Activated naive CD4-positive, alpha-beta T cell treated with anti-CD3 and anti-CD28 coated beads for 36 hours (primary cell): ENCODE measurements at regions of chr2 and their contacts with region 1.

Region 1: DNA sequence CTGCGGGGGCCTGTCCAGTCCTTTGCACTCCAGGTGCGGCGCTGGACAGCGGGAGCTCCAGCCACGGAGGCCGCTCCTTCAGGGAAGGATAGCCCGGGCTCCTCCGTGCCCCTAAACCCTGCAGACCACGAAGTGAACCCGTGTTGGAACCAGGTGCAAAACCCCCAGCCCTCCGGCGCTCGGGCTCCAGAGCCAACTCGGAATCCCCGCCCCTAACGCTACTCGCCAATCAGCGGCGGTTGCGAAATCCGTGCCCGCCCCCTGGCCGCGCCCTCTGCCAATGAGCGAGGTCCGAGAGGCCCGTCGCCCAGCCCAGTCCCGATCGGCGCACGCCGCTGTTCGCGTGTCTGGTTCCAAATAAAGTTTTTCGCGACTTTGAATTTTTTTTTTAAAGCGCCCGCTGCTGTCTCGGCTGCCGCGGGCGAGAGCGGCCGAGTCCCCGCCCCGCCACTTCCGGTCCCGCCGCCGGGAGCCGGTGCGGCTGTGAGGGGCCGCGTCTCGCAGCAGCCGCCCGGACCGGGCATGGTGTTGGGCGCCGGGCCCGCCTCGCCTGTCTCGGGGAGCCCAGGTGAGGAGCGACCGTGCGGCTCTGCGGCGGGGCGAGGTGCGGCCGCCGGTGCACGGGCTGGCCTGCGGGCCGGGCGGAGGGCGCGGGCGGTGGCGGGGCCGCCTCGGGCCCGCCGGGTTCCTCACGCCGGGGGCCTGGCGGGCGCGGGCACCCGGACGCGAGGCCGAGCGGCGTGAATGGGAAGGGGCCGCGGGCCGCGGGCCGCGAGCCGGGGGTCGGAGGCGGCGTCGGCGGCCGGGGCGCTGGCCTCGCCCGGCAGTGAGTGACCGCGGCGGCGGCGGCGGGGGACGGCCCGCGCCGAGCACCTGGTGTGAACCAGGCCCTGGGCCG is at the start of gene UBE2F:
- DNase-seq: peak; percentile 96
- H3K4me3 Mint-ChIP-seq: peak within 1 kb of the TSS; percentile 81
- H3K27ac Mint-ChIP-seq: peak within 1 kb of the TSS; percentile 65
- H3K4me1 Mint-ChIP-seq: peaks cover 40% of the 10 kb centered on the region
- H3K27me3 Mint-ChIP-seq: no peaks in the 10 kb centered on the region
- total RNA-seq, gene UBE2F: 43.4 to 45.5 TPM

Region 2: DNA sequence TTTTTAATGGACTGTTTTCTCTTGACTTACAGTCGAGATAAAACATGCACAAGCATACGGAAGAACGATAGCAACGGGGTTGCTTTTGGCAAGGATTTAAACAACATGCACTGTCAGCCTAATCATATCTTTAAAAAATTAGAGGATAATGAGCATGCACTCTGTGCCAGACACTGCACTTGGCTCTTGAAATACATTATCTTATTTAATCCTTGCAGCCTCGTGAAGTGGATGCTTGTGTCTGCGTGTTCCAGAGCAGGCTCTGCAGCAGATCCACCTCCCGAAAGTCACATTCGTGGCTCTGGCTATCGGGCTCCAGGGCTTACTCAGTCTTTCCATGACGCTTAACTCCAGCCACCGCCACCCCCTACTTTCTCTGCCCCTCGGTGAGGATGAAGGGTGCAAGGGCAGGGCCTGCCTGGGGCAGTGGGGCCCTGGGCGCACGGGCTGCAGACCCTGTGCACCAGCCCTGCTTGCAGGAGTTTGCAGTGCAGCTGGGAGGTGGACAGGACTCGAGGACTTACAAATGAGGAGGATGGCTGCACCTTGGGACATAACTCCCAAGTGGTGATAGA is 1335.4 kb before region 1 on chr2:
- CTCF ChIA-PET with region 1: no interaction called
- intact Hi-C with region 1: no loop called
- DNase-seq: no peak
- H3K4me3 Mint-ChIP-seq: no peak overlapping the region
- H3K27ac Mint-ChIP-seq: no peak overlapping the region
- H3K4me1 Mint-ChIP-seq: no peaks in the 10 kb centered on the region
- H3K27me3 Mint-ChIP-seq: no peaks in the 10 kb centered on the region

Region 3: GRCh38 chr2:237581751-237582746 is 384.8 kb before region 1 on chr2:
- CTCF ChIA-PET with region 1: no interaction called
- intact Hi-C with region 1: loop called (anchors 2 kb)
- DNase-seq: peak; percentile 87
- H3K4me3 Mint-ChIP-seq: no peak overlapping the region
- H3K27ac Mint-ChIP-seq: peak overlapping the region; percentile 56
- H3K4me1 Mint-ChIP-seq: peaks cover 4% of the 10 kb centered on the region
- H3K27me3 Mint-ChIP-seq: no peaks in the 10 kb centered on the region

Region 4: GRCh38 chr2:237858294-237859081 is 108.3 kb before region 1 on chr2:
- CTCF ChIA-PET with region 1: no interaction called
- intact Hi-C with region 1: loop called (anchors 1 kb)
- DNase-seq: peak; percentile 72
- H3K4me3 Mint-ChIP-seq: peak overlapping the region; percentile 43
- H3K27ac Mint-ChIP-seq: no peak overlapping the region
- H3K4me1 Mint-ChIP-seq: peaks cover 16% of the 10 kb centered on the region
- H3K27me3 Mint-ChIP-seq: peaks cover 18% of the 10 kb centered on the region

Region 5: GRCh38 chr2:237998530-237998929 is 31.7 kb after region 1 on chr2:
- CTCF ChIA-PET with region 1: interaction called, 4 read pairs
- intact Hi-C with region 1: loop called (anchors 1 kb)
- DNase-seq: peak; percentile 76
- H3K4me3 Mint-ChIP-seq: peak overlapping the region; percentile 50
- H3K27ac Mint-ChIP-seq: peak overlapping the region; percentile 95
- H3K4me1 Mint-ChIP-seq: peaks cover 64% of the 10 kb centered on the region
- H3K27me3 Mint-ChIP-seq: no peaks in the 10 kb centered on the region

Region 6: DNA sequence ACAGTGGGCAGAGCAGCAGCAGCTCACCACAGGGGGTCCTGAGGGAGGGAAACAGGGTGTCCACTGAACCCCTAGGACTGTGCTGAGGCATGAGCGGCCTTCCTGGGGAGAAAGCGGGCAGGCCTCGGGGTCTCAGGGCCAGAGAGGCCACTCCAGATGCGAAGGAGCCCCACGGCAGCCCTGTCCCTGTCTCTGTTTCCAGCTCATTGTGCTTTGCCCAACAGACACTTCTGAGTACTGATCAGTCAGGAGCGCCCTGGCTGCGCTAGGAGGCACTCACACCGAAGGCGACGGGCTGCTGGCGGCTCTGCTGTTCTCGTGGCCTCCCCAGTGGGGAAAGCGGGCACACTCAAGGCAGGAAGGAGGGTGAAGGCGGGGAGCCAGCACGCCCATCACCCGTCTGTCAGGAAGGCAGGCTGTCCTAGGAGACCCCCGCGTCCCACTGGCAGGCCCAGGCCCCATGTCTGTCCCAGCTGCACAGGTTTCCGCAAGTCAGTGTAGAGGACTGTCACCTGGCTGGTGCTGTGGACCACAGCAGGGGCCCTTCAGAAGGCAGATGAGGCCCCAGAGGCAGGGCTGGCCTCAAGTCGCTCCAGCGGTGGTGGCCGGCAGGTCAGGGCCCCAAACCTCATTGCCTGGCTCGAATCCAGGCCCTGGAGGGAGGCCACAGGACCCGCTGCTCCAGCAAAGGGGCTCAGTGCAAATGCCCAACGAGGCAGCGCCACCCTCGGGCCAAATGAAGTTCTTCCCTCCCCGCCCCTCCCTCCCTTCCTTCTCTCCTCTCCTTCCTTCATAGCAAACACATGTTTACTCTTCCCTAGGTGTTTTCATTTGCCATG is 140.1 kb after region 1 on chr2:
- CTCF ChIA-PET with region 1: interaction called, 6 read pairs
- intact Hi-C with region 1: loop called (anchors 1 kb)
- DNase-seq: peak; percentile 44
- H3K4me3 Mint-ChIP-seq: no peak overlapping the region
- H3K27ac Mint-ChIP-seq: no peak overlapping the region
- H3K4me1 Mint-ChIP-seq: peaks cover 10% of the 10 kb centered on the region
- H3K27me3 Mint-ChIP-seq: no peaks in the 10 kb centered on the region

Region 7: DNA sequence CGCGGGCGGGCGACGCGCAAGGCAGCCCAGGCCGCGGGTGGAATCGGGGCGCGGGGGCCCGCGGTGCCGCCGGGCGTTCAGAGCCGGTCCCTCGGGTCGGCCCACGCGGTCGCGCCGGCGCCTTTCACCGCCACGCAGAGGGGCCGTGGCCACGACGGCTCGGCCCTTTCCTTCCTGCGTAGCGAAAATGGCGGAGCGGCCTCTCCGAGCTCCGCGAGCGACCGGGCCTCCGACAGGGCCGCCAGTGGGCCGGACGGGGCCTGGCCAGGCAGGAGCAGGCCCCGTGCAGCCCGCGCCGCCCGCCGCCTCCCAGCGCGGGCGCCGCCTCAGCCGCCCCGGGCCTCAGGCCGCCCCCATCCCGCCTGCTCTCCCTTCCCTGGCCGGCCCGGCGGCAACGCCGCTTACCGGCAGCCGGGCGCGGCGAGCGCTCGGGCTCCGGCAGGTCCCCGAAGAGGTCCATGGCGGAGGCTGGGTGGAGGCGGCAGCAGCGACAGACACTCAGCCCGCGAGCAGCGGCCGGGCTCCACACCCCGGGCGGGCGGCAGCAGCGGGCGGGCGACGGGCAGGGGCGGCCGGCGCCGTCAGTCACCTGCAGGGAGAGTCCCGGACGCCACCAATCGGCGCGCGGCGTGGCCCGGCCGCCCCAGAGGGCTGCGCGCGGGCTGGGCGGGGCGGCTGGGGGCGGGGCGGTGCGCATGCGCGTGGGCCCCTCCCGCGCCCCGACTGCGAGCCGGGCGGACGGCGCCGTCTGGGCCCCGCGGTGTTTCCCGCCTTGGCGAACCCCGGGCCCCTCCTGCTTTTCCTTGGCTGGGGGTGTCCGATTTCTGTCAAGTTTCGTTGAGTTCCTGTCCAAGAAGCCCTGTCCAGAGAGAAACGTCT is 236.5 kb after region 1 on chr2 and contains the start of gene ILKAP:
- CTCF ChIA-PET with region 1: interaction called, 4 read pairs
- intact Hi-C with region 1: loop called (anchors 2 kb)
- DNase-seq: peak; percentile 89
- H3K4me3 Mint-ChIP-seq: peak within 1 kb of the TSS; percentile 80
- H3K27ac Mint-ChIP-seq: peak within 1 kb of the TSS; percentile 77
- H3K4me1 Mint-ChIP-seq: peaks cover 41% of the 10 kb centered on the region
- H3K27me3 Mint-ChIP-seq: no peaks in the 10 kb centered on the region
- total RNA-seq, gene ILKAP: 46.6 to 46.7 TPM

Region 8: GRCh38 chr2:238288650-238289573 is 322.1 kb after region 1 on chr2:
- CTCF ChIA-PET with region 1: no interaction called
- intact Hi-C with region 1: loop called (anchors 1 kb)
- DNase-seq: peak; percentile 97
- H3K4me3 Mint-ChIP-seq: peak overlapping the region; percentile 89
- H3K27ac Mint-ChIP-seq: peak overlapping the region; percentile 85
- H3K4me1 Mint-ChIP-seq: peaks cover 36% of the 10 kb centered on the region
- H3K27me3 Mint-ChIP-seq: no peaks in the 10 kb centered on the region